ENCODE measurements at regions of chr18 and their contacts with region 1.

Region 1: GRCh38 chr18:59837586-59837985 is 62.2 kb upstream of the PMAIP1 start:
- DNase-seq: peak; percentile 32
- H3K4me3 ChIP-seq: no peak overlapping the region
- H3K27ac ChIP-seq: no peak overlapping the region
- H3K4me1 ChIP-seq: no peaks in the 10 kb centered on the region
- H3K27me3 ChIP-seq: no peaks in the 10 kb centered on the region
- CTCF ChIP-seq: peak; percentile 94

Region 2: DNA sequence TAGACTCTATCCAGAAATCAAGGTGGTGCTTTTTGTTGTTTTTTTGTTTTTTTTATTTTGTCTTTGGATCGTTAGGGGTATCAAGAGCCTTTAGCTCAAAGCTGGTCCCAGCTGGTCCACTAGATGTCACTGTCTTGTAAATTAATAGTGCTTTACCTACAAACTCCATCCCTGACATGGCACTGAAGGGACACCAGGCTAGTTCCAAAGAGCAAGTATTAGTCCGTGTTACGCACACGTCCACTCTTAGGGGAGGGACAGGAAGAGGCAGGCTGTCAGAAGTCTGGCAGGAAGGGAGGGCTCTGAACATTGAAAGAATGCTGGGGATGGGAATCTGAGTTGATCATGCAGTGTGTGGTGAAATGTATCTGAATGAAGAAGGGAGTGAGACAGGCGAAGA is 54.4 kb before region 1 on chr18:
- intact Hi-C with region 1: no loop called
- DNase-seq: no peak
- H3K4me3 ChIP-seq: no peak overlapping the region
- H3K27ac ChIP-seq: no peak overlapping the region
- H3K4me1 ChIP-seq: no peaks in the 10 kb centered on the region
- H3K27me3 ChIP-seq: no peaks in the 10 kb centered on the region
- CTCF ChIP-seq: no peak

Region 3: DNA sequence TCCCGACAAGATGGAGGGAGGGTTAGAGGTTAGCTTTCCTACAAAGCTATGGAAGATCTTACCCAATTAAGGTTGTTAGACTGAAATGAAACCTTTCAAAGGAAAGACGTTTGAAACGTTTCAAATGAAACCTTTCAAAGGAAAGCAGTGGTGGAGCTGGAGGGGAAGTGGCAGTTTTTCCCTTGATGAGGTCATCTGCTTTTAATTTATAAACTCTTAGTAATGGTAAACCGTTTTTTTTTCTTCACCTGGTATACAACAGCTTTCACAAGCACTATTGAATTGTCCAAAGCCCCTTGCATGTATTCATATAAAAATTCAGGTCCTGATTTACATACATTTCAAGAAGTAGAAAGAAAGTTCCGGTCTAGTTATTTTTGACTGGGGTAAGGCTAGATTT is 69.6 kb after region 1 on chr18:
- intact Hi-C with region 1: loop called (anchors 5 kb)
- DNase-seq: no peak
- H3K4me3 ChIP-seq: no peak overlapping the region
- H3K27ac ChIP-seq: no peak overlapping the region
- H3K4me1 ChIP-seq: no peaks in the 10 kb centered on the region
- H3K27me3 ChIP-seq: no peaks in the 10 kb centered on the region
- CTCF ChIP-seq: no peak

Region 4: DNA sequence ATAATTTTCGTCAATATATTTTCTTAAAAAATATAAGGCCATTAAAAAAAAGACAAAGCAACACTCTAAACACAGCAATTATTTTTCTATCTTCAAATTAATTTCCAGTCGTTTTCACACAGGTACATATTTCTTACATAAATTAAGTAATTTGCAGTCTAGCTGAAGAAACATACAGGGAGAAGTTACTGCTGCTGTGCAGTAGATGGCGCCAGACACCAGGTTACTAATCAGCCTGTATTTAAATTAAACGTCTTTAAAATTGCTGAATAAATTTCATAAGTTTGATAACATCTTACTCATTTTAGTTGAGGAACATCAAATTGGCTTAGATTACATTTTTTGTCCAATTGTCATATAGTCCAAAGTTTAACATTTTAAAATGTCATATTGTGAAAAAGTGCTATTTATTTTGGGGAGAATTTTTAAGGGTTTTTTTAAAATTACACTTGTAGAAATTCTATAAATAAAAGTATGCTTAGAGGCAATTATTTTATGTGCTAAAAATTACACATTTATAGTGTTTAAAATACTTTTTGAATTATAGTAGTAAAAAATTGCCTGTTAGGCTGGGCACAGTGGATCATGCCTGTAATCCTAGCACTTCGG is 150.6 kb after region 1 on chr18:
- intact Hi-C with region 1: loop called (anchors 5 kb)
- DNase-seq: peak; percentile 31
- H3K4me3 ChIP-seq: no peak overlapping the region
- H3K27ac ChIP-seq: no peak overlapping the region
- H3K4me1 ChIP-seq: no peaks in the 10 kb centered on the region
- H3K27me3 ChIP-seq: no peaks in the 10 kb centered on the region
- CTCF ChIP-seq: peak; percentile 94

Region 5: DNA sequence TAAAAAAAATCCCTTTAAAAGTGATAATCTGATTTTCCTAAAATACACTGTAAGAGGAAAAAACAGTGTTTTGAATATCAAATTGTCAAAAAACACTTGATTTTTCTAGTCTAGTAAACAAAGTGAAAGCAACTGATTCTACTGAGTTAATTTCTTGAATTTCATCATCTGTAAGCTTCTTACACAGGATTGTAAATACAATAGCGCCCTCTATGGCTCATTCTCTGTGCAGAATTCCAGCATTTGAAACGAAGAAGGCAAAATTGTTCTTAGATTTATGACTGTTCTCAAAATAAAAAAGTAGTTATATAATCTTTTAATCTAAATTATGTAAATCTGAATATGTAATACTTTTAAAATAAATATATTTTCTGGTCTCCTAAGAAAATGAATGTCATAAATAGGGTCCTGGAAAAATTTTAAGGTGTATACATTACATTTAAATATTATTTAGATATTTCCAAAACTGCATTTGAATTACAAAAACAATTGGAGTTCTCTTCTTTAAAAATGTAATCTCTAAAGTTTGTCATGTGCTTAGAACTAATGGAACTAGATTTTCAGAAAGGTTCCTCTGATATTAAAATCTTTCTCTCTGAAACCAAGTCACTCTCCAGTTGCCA is 711.9 kb after region 1 on chr18:
- intact Hi-C with region 1: loop called (anchors 10 kb)
- DNase-seq: no peak
- H3K4me3 ChIP-seq: no peak overlapping the region
- H3K27ac ChIP-seq: no peak overlapping the region
- H3K4me1 ChIP-seq: no peaks in the 10 kb centered on the region
- H3K27me3 ChIP-seq: no peaks in the 10 kb centered on the region
- CTCF ChIP-seq: peak; percentile 76